ENCODE measurements at regions of chr12 and their contacts with region 1.

Region 1: GRCh38 chr12:49342066-49342913 is 4.4 kb upstream of the DNAJC22 start:
- DNase-seq: peak; percentile 79
- H3K4me3 Mint-ChIP-seq: no peak overlapping the region
- H3K27ac Mint-ChIP-seq: no peak overlapping the region
- H3K4me1 Mint-ChIP-seq: peaks cover 42% of the 10 kb centered on the region
- H3K27me3 Mint-ChIP-seq: peaks cover 77% of the 10 kb centered on the region
- CTCF ChIP-seq: peak; percentile 79

Region 2: GRCh38 chr12:49296034-49296835 is 46.1 kb before region 1 on chr12:
- CTCF ChIA-PET with region 1: interaction called, 12 read pairs
- intact Hi-C with region 1: no loop called
- DNase-seq: peak; percentile 74
- H3K4me3 Mint-ChIP-seq: peak overlapping the region; percentile 60
- H3K27ac Mint-ChIP-seq: no peak overlapping the region
- H3K4me1 Mint-ChIP-seq: peaks cover 23% of the 10 kb centered on the region
- H3K27me3 Mint-ChIP-seq: peaks cover 24% of the 10 kb centered on the region
- CTCF ChIP-seq: peak; percentile 83

Region 3: GRCh38 chr12:49400304-49400703 is 58.0 kb after region 1 on chr12:
- CTCF ChIA-PET with region 1: no interaction called
- intact Hi-C with region 1: no loop called
- DNase-seq: no peak
- H3K4me3 Mint-ChIP-seq: no peak overlapping the region
- H3K27ac Mint-ChIP-seq: no peak overlapping the region
- H3K4me1 Mint-ChIP-seq: peaks cover 23% of the 10 kb centered on the region
- H3K27me3 Mint-ChIP-seq: no peaks in the 10 kb centered on the region
- CTCF ChIP-seq: no peak

Region 4: DNA sequence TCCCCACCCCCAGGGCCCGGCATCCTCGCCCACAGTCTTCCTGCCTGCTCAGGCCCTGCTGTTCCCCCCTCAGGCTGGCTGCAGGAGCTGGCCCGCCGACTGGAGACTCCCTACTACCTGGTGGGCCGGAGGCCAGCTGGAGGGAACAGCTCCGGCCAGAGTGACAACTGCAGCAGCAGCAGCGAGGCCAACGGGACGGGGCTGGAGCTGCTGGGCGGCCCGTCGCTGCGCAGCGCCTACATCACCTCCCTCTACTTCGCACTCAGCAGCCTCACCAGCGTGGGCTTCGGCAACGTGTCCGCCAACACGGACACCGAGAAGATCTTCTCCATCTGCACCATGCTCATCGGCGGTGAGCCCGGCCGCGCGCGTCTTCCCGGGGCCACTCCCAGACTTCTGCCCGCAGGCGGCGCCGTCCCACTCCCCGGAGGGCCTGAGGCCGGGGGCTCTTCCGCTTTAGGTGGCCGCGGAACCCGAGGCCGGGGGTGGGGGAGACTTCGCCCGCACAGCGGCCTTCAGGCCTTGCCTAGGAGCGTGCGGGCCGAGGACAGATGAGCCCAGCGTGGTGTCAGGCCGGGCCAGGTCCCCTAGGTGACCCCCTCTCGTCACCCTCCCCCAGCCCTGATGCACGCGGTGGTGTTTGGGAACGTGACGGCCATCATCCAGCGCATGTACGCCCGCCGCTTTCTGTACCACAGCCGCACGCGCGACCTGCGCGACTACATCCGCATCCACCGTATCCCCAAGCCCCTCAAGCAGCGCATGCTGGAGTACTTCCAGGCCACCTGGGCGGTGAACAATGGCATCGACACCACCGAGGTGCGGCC is 206.7 kb after region 1 on chr12:
- CTCF ChIA-PET with region 1: no interaction called
- intact Hi-C with region 1: no loop called
- DNase-seq: no peak
- H3K4me3 Mint-ChIP-seq: no peak overlapping the region
- H3K27ac Mint-ChIP-seq: no peak overlapping the region
- H3K4me1 Mint-ChIP-seq: no peaks in the 10 kb centered on the region
- H3K27me3 Mint-ChIP-seq: peaks cover 66% of the 10 kb centered on the region
- CTCF ChIP-seq: no peak

Measured in Calu3 (cell line).